ENCODE measurements at regions of chr4 and their contacts with region 1.

Region 1: GRCh38 chr4:37603070-37603468 is 83.1 kb downstream of the RELL1 start:
- DNase-seq: peak; percentile 83
- H3K4me3 Mint-ChIP-seq: no peak overlapping the region
- H3K27ac Mint-ChIP-seq: no peak overlapping the region
- H3K4me1 Mint-ChIP-seq: peaks cover 8% of the 10 kb centered on the region
- H3K27me3 Mint-ChIP-seq: no peaks in the 10 kb centered on the region

Region 2: GRCh38 chr4:37623125-37623524 is 20.1 kb after region 1 on chr4:
- CTCF ChIA-PET with region 1: interaction called, 11 read pairs
- POLR2A ChIA-PET with region 1: no interaction called
- intact Hi-C with region 1: no loop called
- DNase-seq: no peak
- H3K4me3 Mint-ChIP-seq: no peak overlapping the region
- H3K27ac Mint-ChIP-seq: no peak overlapping the region
- H3K4me1 Mint-ChIP-seq: no peaks in the 10 kb centered on the region
- H3K27me3 Mint-ChIP-seq: no peaks in the 10 kb centered on the region

Region 3: DNA sequence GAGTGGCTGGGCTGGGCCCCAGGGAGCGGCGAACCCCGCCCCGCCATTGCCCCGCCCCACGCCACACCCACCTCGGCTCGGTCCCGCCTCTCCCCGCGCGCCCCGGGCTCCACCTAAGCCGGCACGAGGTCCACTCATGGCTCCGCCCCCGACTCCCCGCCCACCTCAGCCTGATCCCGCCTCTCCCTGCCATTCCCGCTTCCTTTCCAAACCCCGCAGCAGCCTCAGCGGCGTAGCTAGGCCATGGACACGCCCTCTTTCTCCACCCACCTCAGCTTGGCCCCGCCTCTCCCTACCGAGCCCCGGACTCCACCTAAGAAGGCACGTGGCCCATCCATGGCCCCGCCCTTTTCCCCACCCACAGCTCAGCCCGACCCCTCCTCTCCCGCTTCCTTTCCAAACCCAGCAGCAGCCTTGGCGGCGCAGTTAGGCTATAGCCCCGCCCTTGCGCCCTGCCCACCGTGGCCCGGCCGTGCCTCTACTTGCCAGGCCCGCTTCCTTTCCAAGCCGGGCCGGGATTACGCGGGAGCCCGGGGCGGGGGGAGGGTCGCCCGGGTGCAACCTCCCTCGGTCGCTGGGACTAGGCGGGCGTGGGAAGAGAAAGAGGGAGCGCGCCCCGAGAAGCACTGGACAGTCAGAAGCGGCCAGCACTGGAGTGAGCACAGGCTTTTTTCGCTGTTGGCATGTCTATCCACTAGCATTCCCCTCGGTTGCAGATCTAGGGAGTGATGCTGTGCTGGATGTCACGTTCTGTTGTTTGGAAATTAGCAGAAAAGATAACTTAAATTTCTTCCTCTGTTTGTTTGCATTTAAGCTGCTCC is 83.5 kb after region 1 on chr4 and contains the start of gene RELL1:
- CTCF ChIA-PET with region 1: interaction called, 5 read pairs
- POLR2A ChIA-PET with region 1: interaction called, 4 read pairs
- intact Hi-C with region 1: loop called (anchors 1 kb)
- DNase-seq: peak; percentile 100
- H3K4me3 Mint-ChIP-seq: peak within 1 kb of the TSS; percentile 86
- H3K27ac Mint-ChIP-seq: peak within 1 kb of the TSS; percentile 91
- H3K4me1 Mint-ChIP-seq: peaks cover 34% of the 10 kb centered on the region
- H3K27me3 Mint-ChIP-seq: no peaks in the 10 kb centered on the region
- total RNA-seq, gene RELL1: 15.0 to 16.0 TPM

Region 4: DNA sequence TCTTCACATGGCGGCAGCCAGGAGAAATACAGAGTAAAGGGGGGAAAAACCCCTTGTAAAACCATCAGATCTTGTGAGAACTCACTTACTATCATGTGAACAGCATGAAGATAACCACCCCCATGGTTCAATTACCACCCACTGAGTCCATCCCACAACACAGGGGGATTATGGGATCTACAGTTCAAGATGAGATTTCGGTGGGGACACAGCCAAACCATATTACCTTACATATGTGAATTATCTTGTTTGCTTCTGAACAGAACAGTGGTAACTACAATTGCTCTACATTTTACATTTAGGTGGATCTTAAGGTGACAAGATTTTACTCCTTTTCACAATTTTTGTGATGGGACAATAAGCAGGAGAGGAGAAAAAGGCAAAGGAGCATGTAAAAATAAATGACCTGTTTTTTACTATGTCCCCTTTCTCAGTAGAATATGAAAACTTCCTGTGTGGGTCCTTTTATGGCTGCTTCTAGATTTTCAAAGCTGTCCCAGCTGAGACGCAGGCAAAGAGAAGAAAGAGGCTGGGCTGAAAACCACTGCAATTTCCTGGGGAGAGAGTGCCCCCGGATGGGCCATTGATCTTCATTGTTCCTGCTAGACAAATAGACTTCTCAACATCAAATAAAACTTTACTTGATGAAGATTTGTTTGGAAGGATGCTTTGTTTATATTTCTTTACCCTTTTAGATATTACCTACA is 177.5 kb after region 1 on chr4:
- CTCF ChIA-PET with region 1: interaction called, 15 read pairs
- POLR2A ChIA-PET with region 1: no interaction called
- intact Hi-C with region 1: loop called (anchors 1 kb)
- DNase-seq: peak; percentile 64
- H3K4me3 Mint-ChIP-seq: no peak overlapping the region
- H3K27ac Mint-ChIP-seq: peak overlapping the region; percentile 39
- H3K4me1 Mint-ChIP-seq: peaks cover 17% of the 10 kb centered on the region
- H3K27me3 Mint-ChIP-seq: peaks cover 1% of the 10 kb centered on the region

Region 5: GRCh38 chr4:38034986-38035882 is 432.2 kb after region 1 on chr4:
- CTCF ChIA-PET with region 1: interaction called, 7 read pairs
- POLR2A ChIA-PET with region 1: no interaction called
- intact Hi-C with region 1: loop called (anchors 2 kb)
- DNase-seq: no peak
- H3K4me3 Mint-ChIP-seq: no peak overlapping the region
- H3K27ac Mint-ChIP-seq: no peak overlapping the region
- H3K4me1 Mint-ChIP-seq: no peaks in the 10 kb centered on the region
- H3K27me3 Mint-ChIP-seq: no peaks in the 10 kb centered on the region

Region 6: GRCh38 chr4:38387348-38387747 is 784.3 kb after region 1 on chr4:
- CTCF ChIA-PET with region 1: no interaction called
- POLR2A ChIA-PET with region 1: no interaction called
- intact Hi-C with region 1: no loop called
- DNase-seq: no peak
- H3K4me3 Mint-ChIP-seq: no peak overlapping the region
- H3K27ac Mint-ChIP-seq: no peak overlapping the region
- H3K4me1 Mint-ChIP-seq: peaks cover 15% of the 10 kb centered on the region
- H3K27me3 Mint-ChIP-seq: no peaks in the 10 kb centered on the region